B cell (primary cell): ENCODE measurements at regions of chr17 and their contacts with region 1.

Region 1: GRCh38 chr17:74457146-74457819 is 9.2 kb upstream of the CD300A start:
- DNase-seq: peak; percentile 82
- ATAC-seq: peak; percentile 53
- H3K4me3 ChIP-seq: no peak overlapping the region
- H3K4me3 Mint-ChIP-seq: peak overlapping the region; percentile 11
- H3K27ac ChIP-seq: no peak overlapping the region
- H3K27ac Mint-ChIP-seq: no peak overlapping the region
- H3K4me1 ChIP-seq: peaks cover 11 to 19% of the 10 kb centered on the region in 2 donors
- H3K4me1 Mint-ChIP-seq: peaks cover 7% of the 10 kb centered on the region
- H3K27me3 ChIP-seq: peaks cover 0 to 31% (median 9%) of the 10 kb centered on the region in 4 experiments
- H3K27me3 Mint-ChIP-seq: peaks cover 31% of the 10 kb centered on the region
- CTCF ChIP-seq: peak; percentile 97

Region 2: GRCh38 chr17:74212913-74213791 is 244.1 kb before region 1 on chr17 and contains the start of gene TTYH2:
- CTCF ChIA-PET with region 1: interaction called, 17 read pairs
- POLR2A ChIA-PET with region 1: no interaction called
- intact Hi-C with region 1: loop called (anchors 1 kb)
- DNase-seq: peak; percentile 84
- ATAC-seq: peak; percentile 77
- H3K4me3 ChIP-seq: peak within 1 kb of the TSS; percentile 23 to 73 (median 55)
- H3K4me3 Mint-ChIP-seq: peak within 1 kb of the TSS; percentile 81
- H3K27ac ChIP-seq: peak within 1 kb of the TSS; percentile 27 to 55
- H3K27ac Mint-ChIP-seq: peak within 1 kb of the TSS; percentile 89
- H3K4me1 ChIP-seq: peaks cover 35 to 44% of the 10 kb centered on the region in 2 donors
- H3K4me1 Mint-ChIP-seq: peaks cover 50% of the 10 kb centered on the region
- H3K27me3 ChIP-seq: no peaks in the 10 kb centered on the region
- H3K27me3 Mint-ChIP-seq: no peaks in the 10 kb centered on the region
- CTCF ChIP-seq: peak; percentile 32
- total RNA-seq, gene TTYH2: 3.1 and 3.8 TPM in 2 replicates

Region 3: GRCh38 chr17:74368092-74369081 is 88.9 kb before region 1 on chr17:
- CTCF ChIA-PET with region 1: interaction called, 65 read pairs
- POLR2A ChIA-PET with region 1: no interaction called
- intact Hi-C with region 1: loop called (anchors 1 kb)
- DNase-seq: peak; percentile 79
- ATAC-seq: peak; percentile 82
- H3K4me3 ChIP-seq: no peak overlapping the region
- H3K4me3 Mint-ChIP-seq: no peak overlapping the region
- H3K27ac ChIP-seq: no peak overlapping the region
- H3K27ac Mint-ChIP-seq: no peak overlapping the region
- H3K4me1 ChIP-seq: peaks cover 12 to 16% of the 10 kb centered on the region in 2 donors
- H3K4me1 Mint-ChIP-seq: peaks cover 12% of the 10 kb centered on the region
- H3K27me3 ChIP-seq: peaks cover 0 to 25% (median 6%) of the 10 kb centered on the region in 4 experiments
- H3K27me3 Mint-ChIP-seq: peaks cover 19% of the 10 kb centered on the region
- CTCF ChIP-seq: peak; percentile 98

Region 4: GRCh38 chr17:74442670-74443515 is 14.4 kb before region 1 on chr17:
- CTCF ChIA-PET with region 1: interaction called, 25 read pairs
- POLR2A ChIA-PET with region 1: no interaction called
- intact Hi-C with region 1: no loop called
- DNase-seq: peak; percentile 77
- ATAC-seq: peak; percentile 86
- H3K4me3 ChIP-seq: peak overlapping the region in 4 of 5 experiments; percentile 6 to 47 (median 38)
- H3K4me3 Mint-ChIP-seq: peak overlapping the region; percentile 73
- H3K27ac ChIP-seq: peak overlapping the region in 1 of 2 donors; percentile 36
- H3K27ac Mint-ChIP-seq: peak overlapping the region; percentile 56
- H3K4me1 ChIP-seq: peaks cover 15 to 30% of the 10 kb centered on the region in 2 donors
- H3K4me1 Mint-ChIP-seq: peaks cover 20% of the 10 kb centered on the region
- H3K27me3 ChIP-seq: peaks cover 0 to 7% (median 0%) of the 10 kb centered on the region in 4 experiments
- H3K27me3 Mint-ChIP-seq: peaks cover 9% of the 10 kb centered on the region
- CTCF ChIP-seq: no peak

Region 5: DNA sequence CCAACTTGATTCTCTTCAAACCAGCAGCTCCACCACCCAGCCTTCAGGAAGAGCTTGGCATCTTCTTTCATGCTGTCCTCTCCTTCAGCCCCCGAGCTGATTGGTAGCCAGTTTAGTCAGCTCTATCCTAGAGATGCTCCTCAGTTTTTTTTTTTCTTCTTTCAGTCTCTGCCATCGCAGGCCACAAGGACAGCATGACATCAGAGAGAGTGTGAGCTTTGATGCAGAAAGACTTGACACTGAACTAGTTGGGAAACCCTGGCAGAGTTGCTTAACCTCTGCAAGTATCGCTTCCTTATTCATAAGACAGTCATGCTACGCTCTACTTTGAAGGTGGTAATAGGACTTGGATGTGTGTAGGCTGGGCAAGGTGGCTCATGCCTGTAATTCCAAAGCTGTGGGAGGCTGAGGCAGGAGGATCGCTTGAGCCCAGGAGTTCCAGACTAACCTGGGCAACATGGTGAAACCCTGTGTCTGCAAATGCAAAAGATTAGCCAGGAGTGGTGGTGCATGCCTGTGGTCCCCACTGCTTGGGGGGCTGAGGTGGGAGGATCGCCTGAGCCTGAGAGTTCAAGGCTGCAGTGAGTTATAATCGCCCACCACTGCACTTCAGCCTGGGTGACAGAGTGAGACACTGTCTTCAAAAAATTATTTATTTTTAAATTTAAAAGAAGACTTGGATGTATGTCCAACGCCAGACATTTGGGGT is 71.4 kb after region 1 on chr17:
- CTCF ChIA-PET with region 1: interaction called, 11 read pairs
- POLR2A ChIA-PET with region 1: interaction called, 3 read pairs
- intact Hi-C with region 1: loop called (anchors 2 kb)
- DNase-seq: peak; percentile 83
- ATAC-seq: peak; percentile 84
- H3K4me3 ChIP-seq: no peak overlapping the region
- H3K4me3 Mint-ChIP-seq: no peak overlapping the region
- H3K27ac ChIP-seq: no peak overlapping the region
- H3K27ac Mint-ChIP-seq: peak overlapping the region; percentile 11
- H3K4me1 ChIP-seq: peaks cover 28 to 39% of the 10 kb centered on the region in 2 donors
- H3K4me1 Mint-ChIP-seq: peaks cover 29% of the 10 kb centered on the region
- H3K27me3 ChIP-seq: peaks cover 0 to 15% (median 0%) of the 10 kb centered on the region in 4 experiments
- H3K27me3 Mint-ChIP-seq: peaks cover 11% of the 10 kb centered on the region
- CTCF ChIP-seq: no peak